ENCODE measurements at regions of chr2 and their contacts with region 1.

Region 1: GRCh38 chr2:204177977-204178540 is 241.5 kb downstream of the ICOS start:
- DNase-seq: peak; percentile 34
- H3K4me3 ChIP-seq: no peak overlapping the region
- H3K27ac ChIP-seq: no peak overlapping the region
- H3K4me1 ChIP-seq: no peaks in the 10 kb centered on the region
- H3K27me3 ChIP-seq: peaks cover 5 to 8% of the 10 kb centered on the region in 2 experiments
- CTCF ChIP-seq: peak; percentile 61 to 63
- POLR2A ChIP-seq: no peak

Region 2: GRCh38 chr2:204072443-204073324 is 105.4 kb before region 1 on chr2:
- CTCF ChIA-PET with region 1: interaction called, 14 read pairs
- POLR2A ChIA-PET with region 1: no interaction called
- dilution Hi-C with region 1: no loop called
- intact Hi-C with region 1: loop called (anchors 1 kb)
- DNase-seq: peak; percentile 38
- H3K4me3 ChIP-seq: no peak overlapping the region
- H3K27ac ChIP-seq: no peak overlapping the region
- H3K4me1 ChIP-seq: no peaks in the 10 kb centered on the region
- H3K27me3 ChIP-seq: peaks cover 8 to 16% of the 10 kb centered on the region in 2 experiments
- CTCF ChIP-seq: peak; percentile 52 to 62
- POLR2A ChIP-seq: no peak

Region 3: GRCh38 chr2:204114295-204115145 is 63.5 kb before region 1 on chr2:
- CTCF ChIA-PET with region 1: interaction called, 36 read pairs
- POLR2A ChIA-PET with region 1: no interaction called
- dilution Hi-C with region 1: no loop called
- intact Hi-C with region 1: no loop called
- DNase-seq: peak; percentile 99
- H3K4me3 ChIP-seq: peak overlapping the region in 1 of 3 experiments; percentile 11
- H3K27ac ChIP-seq: peak overlapping the region; percentile 86
- H3K4me1 ChIP-seq: peaks cover 77% of the 10 kb centered on the region
- H3K27me3 ChIP-seq: no peaks in the 10 kb centered on the region
- CTCF ChIP-seq: no peak
- POLR2A ChIP-seq: peak; percentile 73

Region 4: GRCh38 chr2:204135752-204136151 is 42.3 kb before region 1 on chr2:
- CTCF ChIA-PET with region 1: interaction called, 11 read pairs
- POLR2A ChIA-PET with region 1: no interaction called
- dilution Hi-C with region 1: no loop called
- intact Hi-C with region 1: no loop called
- DNase-seq: no peak
- H3K4me3 ChIP-seq: no peak overlapping the region
- H3K27ac ChIP-seq: no peak overlapping the region
- H3K4me1 ChIP-seq: no peaks in the 10 kb centered on the region
- H3K27me3 ChIP-seq: peaks cover 0 to 10% of the 10 kb centered on the region in 2 experiments
- CTCF ChIP-seq: no peak
- POLR2A ChIP-seq: no peak

Region 5: GRCh38 chr2:204152616-204153015 is 25.4 kb before region 1 on chr2:
- CTCF ChIA-PET with region 1: interaction called, 19 read pairs
- POLR2A ChIA-PET with region 1: no interaction called
- dilution Hi-C with region 1: no loop called
- intact Hi-C with region 1: no loop called
- DNase-seq: no peak
- H3K4me3 ChIP-seq: no peak overlapping the region
- H3K27ac ChIP-seq: no peak overlapping the region
- H3K4me1 ChIP-seq: no peaks in the 10 kb centered on the region
- H3K27me3 ChIP-seq: no peaks in the 10 kb centered on the region
- CTCF ChIP-seq: no peak
- POLR2A ChIP-seq: no peak

Region 6: GRCh38 chr2:204191574-204192335 is 13.7 kb after region 1 on chr2:
- CTCF ChIA-PET with region 1: interaction called, 17 read pairs
- POLR2A ChIA-PET with region 1: no interaction called
- dilution Hi-C with region 1: no loop called
- intact Hi-C with region 1: no loop called
- DNase-seq: no peak
- H3K4me3 ChIP-seq: no peak overlapping the region
- H3K27ac ChIP-seq: no peak overlapping the region
- H3K4me1 ChIP-seq: no peaks in the 10 kb centered on the region
- H3K27me3 ChIP-seq: peaks cover 4 to 5% of the 10 kb centered on the region in 2 experiments
- CTCF ChIP-seq: no peak
- POLR2A ChIP-seq: no peak

Measured in endothelial cell of umbilical vein (primary cell).